IMR-90 (cell line): ENCODE measurements at regions of chr19 and their contacts with region 1.

Region 1: GRCh38 chr19:18322759-18323460 is at the start of gene LSM4:
- DNase-seq: peak; percentile 95
- ATAC-seq: peak; percentile 98
- H3K4me3 ChIP-seq: peak within 1 kb of the TSS; percentile 77
- H3K27ac ChIP-seq: peak within 1 kb of the TSS; percentile 73
- H3K4me1 ChIP-seq: peaks cover 5% of the 10 kb centered on the region; the same call in 1 of the 2 replicates
- H3K27me3 ChIP-seq: no peaks in the 10 kb centered on the region
- CTCF ChIP-seq: peak; percentile 44
- POLR2A ChIP-seq: peak; percentile 54; the same call in 1 of the 2 replicates
- RAD21 ChIP-seq: peak; percentile 48
- total RNA-seq, gene LSM4: 44.8 and 88.0 TPM in 2 replicates

Region 2: DNA sequence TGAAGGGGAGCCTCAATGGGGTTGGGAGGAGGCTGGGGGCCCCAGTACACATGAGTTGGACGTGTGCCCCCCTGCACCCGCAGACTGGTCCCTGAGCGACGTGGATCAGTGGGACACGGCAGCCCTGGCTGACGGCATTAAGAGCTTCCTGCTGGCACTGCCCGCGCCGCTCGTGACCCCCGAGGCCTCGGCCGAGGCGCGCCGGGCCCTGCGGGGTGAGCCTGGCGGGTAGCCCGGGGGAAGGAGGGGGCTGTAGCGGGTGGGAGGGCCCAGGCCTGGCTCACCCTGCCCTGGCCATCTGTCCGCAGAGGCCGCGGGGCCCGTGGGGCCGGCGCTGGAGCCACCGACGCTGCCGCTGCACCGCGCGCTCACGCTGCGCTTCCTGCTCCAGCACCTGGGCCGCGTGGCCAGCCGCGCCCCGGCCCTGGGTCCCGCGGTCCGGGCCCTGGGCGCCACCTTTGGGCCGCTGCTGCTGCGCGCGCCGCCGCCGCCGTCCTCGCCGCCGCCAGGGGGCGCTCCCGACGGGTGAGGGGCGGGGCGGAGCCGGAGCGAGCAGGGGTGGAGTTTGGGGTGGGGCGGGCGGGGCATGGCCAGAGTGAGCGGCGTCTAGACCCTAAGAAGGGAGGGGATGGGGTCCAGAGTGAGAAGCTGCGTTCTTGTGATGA is 161.8 kb before region 1 on chr19:
- CTCF ChIA-PET with region 1: no interaction called
- POLR2A ChIA-PET with region 1: no interaction called
- dilution Hi-C with region 1: no loop called
- in situ Hi-C with region 1: no loop called
- intact Hi-C with region 1: no loop called
- DNase-seq: peak; percentile 28
- ATAC-seq: peak; percentile 94
- H3K4me3 ChIP-seq: 0 out of 2 replicates have a peak overlapping the region, but pooled peaks have one; percentile 13
- H3K27ac ChIP-seq: no peak overlapping the region; the same call in 1 of the 2 replicates
- H3K4me1 ChIP-seq: peaks cover 15% of the 10 kb centered on the region
- H3K27me3 ChIP-seq: no peaks in the 10 kb centered on the region
- CTCF ChIP-seq: peak; percentile 76
- POLR2A ChIP-seq: no peak
- RAD21 ChIP-seq: no peak; the same call in 1 of the 2 replicates

Region 3: DNA sequence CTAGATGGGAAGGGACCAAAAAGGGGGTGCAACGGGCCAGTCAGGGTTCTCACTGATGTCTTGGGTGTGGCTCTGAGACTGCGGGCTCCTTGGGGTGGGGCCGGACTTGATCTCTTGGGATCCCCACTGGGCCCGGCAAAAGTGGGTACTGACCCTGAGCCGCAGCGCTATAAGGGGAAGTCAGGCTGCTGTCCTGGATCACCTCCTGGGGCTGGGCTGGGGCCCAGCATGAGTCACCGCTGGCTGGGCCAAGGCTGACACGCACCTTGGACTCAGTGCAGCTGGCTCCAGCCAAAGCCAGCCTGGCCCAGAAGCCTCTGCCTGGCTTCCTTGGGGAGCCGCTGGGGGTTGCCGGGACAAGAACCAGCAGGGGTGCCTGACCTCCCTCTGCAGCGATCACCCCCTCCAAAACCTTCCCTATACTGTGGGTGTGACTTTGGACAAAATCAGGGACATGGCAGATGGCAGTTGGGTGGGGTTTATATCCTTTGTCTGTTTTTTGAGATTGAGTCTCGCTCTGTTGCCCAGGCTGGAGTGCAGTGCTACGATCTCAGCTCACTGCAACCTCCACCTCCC is 48.0 kb before region 1 on chr19:
- CTCF ChIA-PET with region 1: interaction called, 49 read pairs
- POLR2A ChIA-PET with region 1: interaction called, 7 read pairs
- dilution Hi-C with region 1: no loop called
- in situ Hi-C with region 1: loop called (anchors 5 kb)
- intact Hi-C with region 1: loop called (anchors 1 kb)
- DNase-seq: peak; percentile 89
- ATAC-seq: peak; percentile 76
- H3K4me3 ChIP-seq: no peak overlapping the region
- H3K27ac ChIP-seq: peak overlapping the region; percentile 58
- H3K4me1 ChIP-seq: peaks cover 20% of the 10 kb centered on the region
- H3K27me3 ChIP-seq: no peaks in the 10 kb centered on the region
- CTCF ChIP-seq: 0 out of 2 replicates have a peak, but pooled peaks have one; percentile 3
- POLR2A ChIP-seq: peak; percentile 85
- RAD21 ChIP-seq: peak; percentile 15; the same call in 1 of the 2 replicates

Region 4: GRCh38 chr19:18428173-18428786 is 105.4 kb after region 1 on chr19:
- CTCF ChIA-PET with region 1: no interaction called
- POLR2A ChIA-PET with region 1: no interaction called
- dilution Hi-C with region 1: no loop called
- in situ Hi-C with region 1: no loop called
- intact Hi-C with region 1: no loop called
- DNase-seq: no peak
- ATAC-seq: no peak
- H3K4me3 ChIP-seq: no peak overlapping the region
- H3K27ac ChIP-seq: no peak overlapping the region; the same call in 1 of the 2 replicates
- H3K4me1 ChIP-seq: peaks cover 18% of the 10 kb centered on the region
- H3K27me3 ChIP-seq: no peaks in the 10 kb centered on the region
- CTCF ChIP-seq: no peak
- POLR2A ChIP-seq: no peak
- RAD21 ChIP-seq: no peak